ENCODE measurements at regions of chr1 and their contacts with region 1.

Region 1: GRCh38 chr1:185681034-185681633 is 53.1 kb upstream of the HMCN1 start:
- DNase-seq: peak; percentile 64
- ATAC-seq: peak; percentile 47
- H3K4me3 ChIP-seq: no peak overlapping the region
- H3K4me3 Mint-ChIP-seq: no peak overlapping the region
- H3K27ac ChIP-seq: no peak overlapping the region
- H3K27ac Mint-ChIP-seq: no peak overlapping the region
- H3K4me1 ChIP-seq: peaks cover 9 to 11% of the 10 kb centered on the region in 2 donors
- H3K4me1 Mint-ChIP-seq: peaks cover 19% of the 10 kb centered on the region
- H3K27me3 ChIP-seq: peaks cover 0 to 2% (median 0%) of the 10 kb centered on the region in 4 experiments
- H3K27me3 Mint-ChIP-seq: no peaks in the 10 kb centered on the region
- CTCF ChIP-seq: peak; percentile 68

Region 2: DNA sequence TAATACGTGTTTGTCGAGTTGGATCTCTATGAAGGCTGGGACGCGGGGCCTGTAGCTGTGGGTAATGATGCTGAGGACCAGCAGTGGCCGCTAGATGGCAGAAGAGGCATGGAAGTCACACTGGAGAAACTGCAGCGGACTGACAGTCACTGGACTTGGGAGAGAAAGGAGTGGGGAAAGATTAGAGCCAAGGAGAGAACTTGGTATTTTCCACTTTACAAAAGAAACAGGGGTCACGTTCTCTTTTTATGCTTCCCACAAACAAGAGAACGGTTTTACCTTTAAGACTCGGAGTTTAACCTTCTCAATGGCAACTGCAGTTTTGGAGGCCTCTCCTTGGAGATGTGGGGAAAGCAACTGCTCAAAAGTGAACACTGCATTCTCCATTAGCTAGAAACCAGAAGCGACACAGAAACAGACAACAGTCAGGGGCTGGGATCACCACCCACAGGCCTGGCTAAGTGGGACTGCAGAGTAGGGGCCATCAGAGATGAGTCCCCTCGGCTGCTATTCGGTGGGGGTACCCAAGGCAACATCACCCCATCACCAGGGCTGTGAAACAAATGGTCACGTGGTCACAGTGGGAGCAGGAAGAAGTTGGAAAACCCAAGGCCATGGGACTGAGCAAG is 875.4 kb before region 1 on chr1:
- CTCF ChIA-PET with region 1: interaction called, 23 read pairs
- POLR2A ChIA-PET with region 1: no interaction called
- intact Hi-C with region 1: loop called (anchors 2 kb)
- DNase-seq: peak; percentile 86
- ATAC-seq: peak; percentile 94
- H3K4me3 ChIP-seq: no peak overlapping the region
- H3K4me3 Mint-ChIP-seq: no peak overlapping the region
- H3K27ac ChIP-seq: no peak overlapping the region
- H3K27ac Mint-ChIP-seq: no peak overlapping the region
- H3K4me1 ChIP-seq: peaks cover 0 to 11% of the 10 kb centered on the region in 2 donors
- H3K4me1 Mint-ChIP-seq: peaks cover 9% of the 10 kb centered on the region
- H3K27me3 ChIP-seq: no peaks in the 10 kb centered on the region
- H3K27me3 Mint-ChIP-seq: no peaks in the 10 kb centered on the region
- CTCF ChIP-seq: peak; percentile 97

Region 3: GRCh38 chr1:185170291-185170848 is 510.8 kb before region 1 on chr1:
- CTCF ChIA-PET with region 1: interaction called, 30 read pairs
- POLR2A ChIA-PET with region 1: interaction called, 3 read pairs
- intact Hi-C with region 1: no loop called
- DNase-seq: peak; percentile 79
- ATAC-seq: peak; percentile 81
- H3K4me3 ChIP-seq: no peak overlapping the region
- H3K4me3 Mint-ChIP-seq: no peak overlapping the region
- H3K27ac ChIP-seq: peak overlapping the region in 1 of 2 donors; percentile 3
- H3K27ac Mint-ChIP-seq: no peak overlapping the region
- H3K4me1 ChIP-seq: peaks cover 0 to 6% of the 10 kb centered on the region in 2 donors
- H3K4me1 Mint-ChIP-seq: peaks cover 4% of the 10 kb centered on the region
- H3K27me3 ChIP-seq: no peaks in the 10 kb centered on the region
- H3K27me3 Mint-ChIP-seq: no peaks in the 10 kb centered on the region
- CTCF ChIP-seq: peak; percentile 84

Region 4: GRCh38 chr1:185559684-185560331 is 121.3 kb before region 1 on chr1:
- CTCF ChIA-PET with region 1: interaction called, 14 read pairs
- POLR2A ChIA-PET with region 1: no interaction called
- intact Hi-C with region 1: no loop called
- DNase-seq: peak; percentile 60
- ATAC-seq: peak; percentile 79
- H3K4me3 ChIP-seq: no peak overlapping the region
- H3K4me3 Mint-ChIP-seq: peak overlapping the region; percentile 5
- H3K27ac ChIP-seq: peak overlapping the region in 1 of 2 donors; percentile 25
- H3K27ac Mint-ChIP-seq: peak overlapping the region; percentile 28
- H3K4me1 ChIP-seq: peaks cover 16 to 17% of the 10 kb centered on the region in 2 donors
- H3K4me1 Mint-ChIP-seq: peaks cover 26% of the 10 kb centered on the region
- H3K27me3 ChIP-seq: no peaks in the 10 kb centered on the region
- H3K27me3 Mint-ChIP-seq: no peaks in the 10 kb centered on the region
- CTCF ChIP-seq: no peak

Region 5: DNA sequence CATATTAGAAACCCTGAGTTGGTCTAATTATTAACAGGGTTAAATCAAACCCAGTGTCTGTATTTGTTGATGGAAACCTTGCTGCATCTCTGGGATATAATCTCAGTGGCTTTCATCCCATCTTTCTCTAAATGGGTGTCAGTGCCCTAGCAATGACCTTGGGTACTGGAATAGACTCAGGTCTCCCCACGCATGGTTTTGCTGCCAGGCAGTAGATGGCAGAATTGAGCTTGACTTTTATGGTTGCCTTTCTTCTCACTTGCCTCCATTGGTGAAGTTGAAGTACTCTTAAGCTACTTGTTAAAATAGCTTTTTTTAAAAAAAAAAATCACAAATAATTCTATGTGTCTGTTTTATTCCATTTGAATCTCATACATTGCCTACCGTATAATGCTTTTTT is 28.8 kb before region 1 on chr1:
- CTCF ChIA-PET with region 1: interaction called, 26 read pairs
- POLR2A ChIA-PET with region 1: no interaction called
- intact Hi-C with region 1: no loop called
- DNase-seq: no peak
- ATAC-seq: no peak
- H3K4me3 ChIP-seq: no peak overlapping the region
- H3K4me3 Mint-ChIP-seq: no peak overlapping the region
- H3K27ac ChIP-seq: no peak overlapping the region
- H3K27ac Mint-ChIP-seq: no peak overlapping the region
- H3K4me1 ChIP-seq: no peaks in the 10 kb centered on the region
- H3K4me1 Mint-ChIP-seq: no peaks in the 10 kb centered on the region
- H3K27me3 ChIP-seq: no peaks in the 10 kb centered on the region
- H3K27me3 Mint-ChIP-seq: no peaks in the 10 kb centered on the region
- CTCF ChIP-seq: no peak

Region 6: GRCh38 chr1:185694081-185694480 is 12.9 kb after region 1 on chr1:
- CTCF ChIA-PET with region 1: interaction called, 14 read pairs
- POLR2A ChIA-PET with region 1: interaction called, 5 read pairs
- intact Hi-C with region 1: no loop called
- DNase-seq: peak; percentile 88
- ATAC-seq: peak; percentile 81
- H3K4me3 ChIP-seq: peak overlapping the region; percentile 30 to 67 (median 52)
- H3K4me3 Mint-ChIP-seq: peak overlapping the region; percentile 91
- H3K27ac ChIP-seq: peak overlapping the region; percentile 95 to 96
- H3K27ac Mint-ChIP-seq: peak overlapping the region; percentile 98
- H3K4me1 ChIP-seq: peaks cover 18 to 19% of the 10 kb centered on the region in 2 donors
- H3K4me1 Mint-ChIP-seq: peaks cover 22% of the 10 kb centered on the region
- H3K27me3 ChIP-seq: peaks cover 0 to 2% (median 0%) of the 10 kb centered on the region in 4 experiments
- H3K27me3 Mint-ChIP-seq: peaks cover 25% of the 10 kb centered on the region
- CTCF ChIP-seq: no peak

Measured in B cell (primary cell).